PC-3 (cell line): ENCODE measurements at regions of chr10 and their contacts with region 1.

Region 1: GRCh38 chr10:60646966-60647796 is 131.1 kb upstream of the CDK1 start:
- DNase-seq: peak; percentile 98
- ATAC-seq: peak; percentile 27
- H3K4me3 ChIP-seq: no peak overlapping the region
- H3K27ac ChIP-seq: no peak overlapping the region
- H3K4me1 ChIP-seq: peaks cover 39% of the 10 kb centered on the region
- H3K27me3 ChIP-seq: no peaks in the 10 kb centered on the region
- CTCF ChIP-seq: peak; percentile 99

Region 2: DNA sequence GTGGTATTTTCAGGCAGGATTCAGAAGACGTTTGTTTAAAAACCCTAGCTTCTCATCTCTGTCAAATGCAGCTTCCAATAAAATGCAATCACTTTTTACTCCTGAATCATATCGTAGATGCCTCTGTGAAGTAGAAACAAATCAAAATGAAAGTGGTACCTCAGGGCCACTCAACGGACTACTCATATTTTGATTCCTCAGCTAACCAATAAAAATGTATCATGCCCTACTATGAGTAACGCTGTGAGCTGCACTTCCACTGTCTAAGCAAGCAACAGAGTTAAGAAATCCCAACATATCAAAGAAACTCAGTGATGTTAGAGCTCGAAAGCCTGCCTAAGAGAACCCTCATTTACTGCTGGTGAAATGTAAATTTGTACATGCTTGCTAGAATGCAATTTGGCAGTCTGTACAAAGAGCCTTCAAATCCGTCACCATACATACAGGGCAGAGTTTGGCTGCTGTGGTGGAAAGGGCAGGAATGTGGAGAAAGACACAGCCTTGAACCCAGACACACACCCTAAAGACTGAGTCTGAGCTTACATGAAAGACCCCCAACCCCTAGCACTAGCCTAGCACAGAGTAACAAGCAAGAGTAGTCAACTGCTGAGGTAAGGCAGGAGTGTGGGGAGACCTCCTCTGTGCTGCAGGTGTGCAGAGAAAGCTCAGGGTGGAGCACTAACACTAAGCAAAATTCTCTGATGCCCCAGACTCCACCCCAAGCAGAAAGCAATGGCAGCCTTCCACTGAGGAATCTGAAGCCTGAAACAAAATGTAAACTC is 409.0 kb before region 1 on chr10:
- CTCF ChIA-PET with region 1: no interaction called
- POLR2A ChIA-PET with region 1: no interaction called
- intact Hi-C with region 1: loop called (anchors 2 kb)
- DNase-seq: peak; percentile 89
- ATAC-seq: peak; percentile 99
- H3K4me3 ChIP-seq: peak overlapping the region; percentile 66
- H3K27ac ChIP-seq: 0 out of 2 replicates have a peak overlapping the region, but pooled peaks have one; percentile 3
- H3K4me1 ChIP-seq: peaks cover 25% of the 10 kb centered on the region
- H3K27me3 ChIP-seq: no peaks in the 10 kb centered on the region
- CTCF ChIP-seq: peak; percentile 96

Region 3: GRCh38 chr10:60572511-60573194 is 74.5 kb before region 1 on chr10:
- CTCF ChIA-PET with region 1: interaction called, 3 read pairs
- POLR2A ChIA-PET with region 1: no interaction called
- intact Hi-C with region 1: loop called (anchors 2 kb)
- DNase-seq: peak; percentile 95
- ATAC-seq: peak; percentile 84
- H3K4me3 ChIP-seq: peak overlapping the region; percentile 70
- H3K27ac ChIP-seq: peak overlapping the region; percentile 48
- H3K4me1 ChIP-seq: peaks cover 65% of the 10 kb centered on the region
- H3K27me3 ChIP-seq: no peaks in the 10 kb centered on the region
- CTCF ChIP-seq: 0 out of 2 replicates have a peak, but pooled peaks have one; percentile 11

Region 4: GRCh38 chr10:60733189-60733822 is 86.1 kb after region 1 on chr10:
- CTCF ChIA-PET with region 1: no interaction called
- POLR2A ChIA-PET with region 1: interaction called, 11 read pairs
- intact Hi-C with region 1: no loop called
- DNase-seq: peak; percentile 96
- ATAC-seq: peak; percentile 89
- H3K4me3 ChIP-seq: peak overlapping the region; percentile 75
- H3K27ac ChIP-seq: 0 out of 2 replicates have a peak overlapping the region, but pooled peaks have one; percentile 2
- H3K4me1 ChIP-seq: peaks cover 53% of the 10 kb centered on the region
- H3K27me3 ChIP-seq: no peaks in the 10 kb centered on the region
- CTCF ChIP-seq: peak; percentile 61; the same call in 1 of the 2 replicates